ENCODE measurements at regions of chr11 and their contacts with region 1.

Region 1: GRCh38 chr11:126607374-126607773 is 251.9 kb downstream of the ST3GAL4 start:
- DNase-seq: peak; percentile 75
- ATAC-seq: peak; percentile 99
- H3K4me3 ChIP-seq: no peak overlapping the region
- H3K27ac ChIP-seq: no peak overlapping the region
- H3K4me1 ChIP-seq: no peaks in the 10 kb centered on the region
- H3K27me3 ChIP-seq: peaks cover 92% of the 10 kb centered on the region
- CTCF ChIP-seq: peak; percentile 92

Region 2: DNA sequence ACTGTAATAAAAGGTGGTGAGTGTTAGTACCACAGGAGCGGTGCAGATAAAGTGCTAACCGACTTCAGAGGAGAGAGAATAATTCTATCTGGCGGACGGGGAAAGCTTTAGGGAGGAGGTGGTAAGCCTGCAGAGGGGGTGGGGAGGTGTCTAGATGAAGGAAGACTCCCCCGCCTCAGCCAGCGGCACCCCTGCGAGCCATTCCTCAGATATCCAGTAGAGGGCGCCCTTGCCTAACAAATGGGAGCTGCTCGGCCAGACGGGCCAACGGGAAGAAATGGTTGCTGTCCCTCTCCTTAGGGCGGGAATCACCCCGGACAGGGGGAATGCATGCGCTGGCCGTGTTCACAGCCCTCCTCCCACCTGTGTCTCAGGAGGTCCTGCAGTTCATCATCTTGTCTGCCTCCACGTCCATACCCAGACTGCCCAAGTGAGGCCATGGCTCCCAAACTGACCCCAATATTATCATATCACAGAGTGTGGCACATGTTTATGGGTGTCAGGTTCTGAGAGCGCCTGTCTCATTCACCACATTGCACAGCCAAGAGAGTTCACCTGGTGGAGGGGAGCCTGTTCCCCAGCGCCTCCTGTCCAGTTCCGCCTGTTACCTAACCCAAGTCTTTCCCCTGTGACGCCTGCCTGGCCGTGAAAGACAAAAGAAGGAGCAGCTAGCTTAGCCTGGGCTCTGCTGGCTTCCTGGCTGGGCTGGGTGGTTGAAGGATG is 166.4 kb before region 1 on chr11:
- CTCF ChIA-PET with region 1: interaction called, 3 read pairs
- POLR2A ChIA-PET with region 1: no interaction called
- intact Hi-C with region 1: loop called (anchors 5 kb)
- DNase-seq: peak; percentile 94
- ATAC-seq: peak; percentile 88
- H3K4me3 ChIP-seq: peak overlapping the region; percentile 34; the same call in 1 of the 2 replicates
- H3K27ac ChIP-seq: no peak overlapping the region
- H3K4me1 ChIP-seq: peaks cover 5% of the 10 kb centered on the region; the same call in 1 of the 2 replicates
- H3K27me3 ChIP-seq: no peaks in the 10 kb centered on the region
- CTCF ChIP-seq: peak; percentile 98

Region 3: DNA sequence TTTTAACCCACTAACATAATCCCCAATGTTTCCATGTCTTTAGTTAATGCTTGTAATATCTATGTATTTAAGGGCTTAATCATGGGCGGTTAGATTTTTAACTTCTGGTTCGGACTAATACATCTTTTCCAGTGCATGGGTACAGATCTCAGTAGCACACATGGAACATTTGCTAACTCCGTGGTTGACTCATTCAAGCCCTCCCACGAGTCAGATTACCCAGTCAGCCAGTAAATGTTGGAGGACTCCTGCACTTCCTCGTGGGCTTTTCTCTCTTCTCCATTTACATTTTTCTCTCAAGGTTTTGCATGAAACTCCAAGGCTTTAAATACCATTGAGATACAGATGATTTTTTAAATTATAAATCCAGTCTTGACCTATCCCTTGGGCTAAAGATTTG is 62.0 kb after region 1 on chr11:
- CTCF ChIA-PET with region 1: no interaction called
- POLR2A ChIA-PET with region 1: no interaction called
- intact Hi-C with region 1: no loop called
- DNase-seq: no peak
- ATAC-seq: no peak
- H3K4me3 ChIP-seq: no peak overlapping the region
- H3K27ac ChIP-seq: no peak overlapping the region
- H3K4me1 ChIP-seq: no peaks in the 10 kb centered on the region
- H3K27me3 ChIP-seq: peaks cover 76% of the 10 kb centered on the region
- CTCF ChIP-seq: no peak

Region 4: DNA sequence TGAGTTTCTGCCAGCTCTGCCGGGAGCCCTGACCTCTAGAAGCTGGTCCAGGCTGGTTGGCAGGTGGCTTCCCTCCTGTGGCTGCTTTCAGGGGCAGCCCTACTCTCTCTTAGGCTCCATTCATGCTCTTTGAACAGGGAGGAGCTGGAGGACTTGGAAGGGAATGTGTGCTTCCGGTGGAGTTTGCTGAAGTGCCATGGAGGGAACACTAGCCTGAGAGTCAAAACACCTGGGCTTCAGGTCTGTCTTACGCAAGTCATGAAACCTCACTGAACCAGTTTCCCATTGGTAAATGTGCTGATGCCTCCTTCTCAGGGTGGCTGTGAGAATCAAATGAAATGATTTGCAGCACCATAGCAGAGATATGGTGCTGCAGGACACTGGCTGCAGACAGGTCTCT is 168.7 kb after region 1 on chr11:
- CTCF ChIA-PET with region 1: no interaction called
- POLR2A ChIA-PET with region 1: no interaction called
- intact Hi-C with region 1: no loop called
- DNase-seq: no peak
- ATAC-seq: no peak
- H3K4me3 ChIP-seq: no peak overlapping the region
- H3K27ac ChIP-seq: no peak overlapping the region
- H3K4me1 ChIP-seq: no peaks in the 10 kb centered on the region
- H3K27me3 ChIP-seq: peaks cover 28% of the 10 kb centered on the region
- CTCF ChIP-seq: no peak

Region 5: DNA sequence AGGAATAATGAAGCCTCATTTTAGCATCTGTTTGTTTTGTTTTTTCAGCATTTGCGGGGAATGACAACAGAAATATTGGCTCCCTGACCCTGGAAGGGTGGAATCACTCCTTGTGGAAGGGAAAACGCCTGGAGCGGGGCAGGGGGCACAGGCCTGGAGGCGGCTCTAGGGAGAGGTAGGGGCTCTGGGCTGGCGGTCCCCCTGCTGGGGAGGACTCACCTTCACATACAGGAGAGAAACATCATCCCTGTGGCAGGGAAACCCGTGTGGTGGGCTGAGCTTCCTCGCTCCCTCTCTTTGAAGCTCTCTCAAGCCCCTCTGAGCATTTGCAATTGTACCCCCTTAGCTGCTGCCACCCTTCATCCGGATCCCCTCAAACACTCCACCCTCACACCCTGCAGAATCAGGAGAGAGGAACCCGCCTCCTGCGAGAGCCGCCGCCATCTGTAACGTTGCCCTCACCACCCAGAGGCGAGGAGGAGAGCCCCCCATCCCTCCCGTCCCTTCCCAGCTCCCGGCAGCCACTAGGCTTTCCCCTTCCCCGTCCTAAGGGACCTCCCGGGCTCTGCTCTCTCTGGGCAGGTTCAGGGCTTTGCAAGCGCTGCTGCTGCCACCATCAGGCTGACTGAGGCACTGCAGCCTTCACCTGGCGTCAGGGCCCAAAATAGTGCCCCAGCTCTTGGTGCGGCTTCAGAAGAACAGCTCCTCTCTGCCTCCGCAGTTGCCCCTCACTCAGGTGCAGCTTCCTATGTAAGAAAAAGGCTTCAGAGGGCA is 382.8 kb after region 1 on chr11:
- CTCF ChIA-PET with region 1: interaction called, 3 read pairs
- POLR2A ChIA-PET with region 1: no interaction called
- intact Hi-C with region 1: loop called (anchors 2 kb)
- DNase-seq: peak; percentile 77
- ATAC-seq: peak; percentile 93
- H3K4me3 ChIP-seq: no peak overlapping the region
- H3K27ac ChIP-seq: no peak overlapping the region
- H3K4me1 ChIP-seq: peaks cover 26% of the 10 kb centered on the region
- H3K27me3 ChIP-seq: peaks cover 49% of the 10 kb centered on the region
- CTCF ChIP-seq: peak; percentile 94